ENCODE measurements at regions of chr1 and their contacts with region 1.

Region 1: DNA sequence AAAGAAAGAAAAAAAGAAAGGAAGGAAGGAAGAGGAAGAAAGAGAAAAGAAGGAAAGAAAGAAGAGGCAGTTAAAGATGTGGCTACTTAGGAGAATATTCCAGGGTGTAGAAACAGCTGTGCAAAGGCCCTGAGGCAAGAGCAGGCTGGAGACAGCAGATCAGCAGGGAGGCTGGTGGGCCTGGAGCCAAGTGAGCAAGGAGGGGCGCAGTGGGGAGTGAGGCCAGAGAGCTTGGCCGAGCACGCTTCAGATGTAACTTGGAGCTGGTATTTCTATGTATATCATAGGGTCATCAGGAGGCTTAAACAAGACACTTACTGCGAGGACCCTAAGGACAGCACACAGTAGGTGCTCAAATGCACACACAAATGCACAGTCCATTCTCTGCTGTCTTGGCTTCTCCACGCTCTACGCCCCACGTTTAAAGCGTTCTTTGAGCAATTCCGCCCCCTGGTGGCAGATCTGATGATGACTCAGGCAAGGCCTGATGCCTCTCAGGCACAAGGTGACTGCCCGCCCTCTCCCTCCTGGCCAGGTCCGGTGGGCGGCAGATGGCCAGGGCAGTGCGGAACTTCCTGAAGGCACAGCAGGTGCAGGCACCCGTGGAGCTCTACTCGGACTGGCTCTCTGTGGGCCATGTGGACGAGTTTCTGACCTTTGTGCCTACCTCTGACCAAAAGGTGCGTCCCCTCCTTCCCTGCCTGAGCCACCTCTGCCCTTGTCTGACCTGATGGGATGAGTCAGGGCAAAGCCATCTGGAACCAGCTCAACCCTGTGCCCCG is 11.9 kb upstream of the PADI3 start:
- DNase-seq: peak; percentile 91
- H3K4me3 Mint-ChIP-seq: no peak overlapping the region
- H3K27ac Mint-ChIP-seq: no peak overlapping the region
- H3K4me1 Mint-ChIP-seq: no peaks in the 10 kb centered on the region
- H3K27me3 Mint-ChIP-seq: peaks cover 28% of the 10 kb centered on the region

Region 2: DNA sequence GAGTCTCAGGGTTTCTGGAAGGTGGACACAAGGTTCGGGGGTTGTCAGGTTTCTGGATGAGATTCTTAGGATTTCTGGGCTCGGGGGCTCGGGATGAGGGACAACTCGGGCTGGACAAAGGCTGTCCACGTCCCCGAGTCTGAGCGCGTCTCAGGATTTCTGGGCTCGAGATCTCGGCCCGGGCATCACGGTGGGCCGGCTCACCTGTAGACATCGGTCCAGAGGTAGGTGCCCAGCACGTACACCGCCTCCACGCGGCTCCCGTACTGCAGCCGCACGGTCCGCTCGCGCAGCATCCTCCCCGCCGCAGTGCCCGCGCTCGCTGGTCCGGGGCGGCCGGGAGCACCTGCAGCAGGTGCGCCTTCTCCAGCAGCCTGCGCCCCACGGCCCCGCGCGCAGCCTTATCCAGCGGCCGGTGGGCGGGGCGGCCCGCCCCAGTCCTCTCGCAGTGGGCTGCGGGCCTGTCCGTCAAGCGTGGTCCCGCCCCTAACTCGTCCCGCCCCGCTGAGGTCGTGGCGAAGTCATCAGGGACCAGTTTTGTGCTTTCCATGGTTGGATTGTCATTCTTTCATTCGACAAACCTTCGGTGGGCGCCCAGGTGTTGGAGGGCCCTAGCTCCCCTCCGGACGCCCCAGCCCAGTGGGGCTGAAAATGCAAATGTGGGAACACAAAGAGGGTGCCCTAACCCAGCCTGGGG is 117.7 kb before region 1 on chr1 and contains the start of gene PADI2:
- CTCF ChIA-PET with region 1: interaction called, 148 read pairs
- DNase-seq: peak; percentile 66
- H3K4me3 Mint-ChIP-seq: no peak within 1 kb of the TSS
- H3K27ac Mint-ChIP-seq: no peak within 1 kb of the TSS
- H3K4me1 Mint-ChIP-seq: peaks cover 12% of the 10 kb centered on the region
- H3K27me3 Mint-ChIP-seq: peaks cover 85% of the 10 kb centered on the region

Region 3: GRCh38 chr1:17125756-17126237 is 111.2 kb before region 1 on chr1:
- CTCF ChIA-PET with region 1: interaction called, 148 read pairs
- DNase-seq: peak; percentile 87
- H3K4me3 Mint-ChIP-seq: no peak overlapping the region
- H3K27ac Mint-ChIP-seq: no peak overlapping the region
- H3K4me1 Mint-ChIP-seq: no peaks in the 10 kb centered on the region
- H3K27me3 Mint-ChIP-seq: peaks cover 43% of the 10 kb centered on the region

Region 4: DNA sequence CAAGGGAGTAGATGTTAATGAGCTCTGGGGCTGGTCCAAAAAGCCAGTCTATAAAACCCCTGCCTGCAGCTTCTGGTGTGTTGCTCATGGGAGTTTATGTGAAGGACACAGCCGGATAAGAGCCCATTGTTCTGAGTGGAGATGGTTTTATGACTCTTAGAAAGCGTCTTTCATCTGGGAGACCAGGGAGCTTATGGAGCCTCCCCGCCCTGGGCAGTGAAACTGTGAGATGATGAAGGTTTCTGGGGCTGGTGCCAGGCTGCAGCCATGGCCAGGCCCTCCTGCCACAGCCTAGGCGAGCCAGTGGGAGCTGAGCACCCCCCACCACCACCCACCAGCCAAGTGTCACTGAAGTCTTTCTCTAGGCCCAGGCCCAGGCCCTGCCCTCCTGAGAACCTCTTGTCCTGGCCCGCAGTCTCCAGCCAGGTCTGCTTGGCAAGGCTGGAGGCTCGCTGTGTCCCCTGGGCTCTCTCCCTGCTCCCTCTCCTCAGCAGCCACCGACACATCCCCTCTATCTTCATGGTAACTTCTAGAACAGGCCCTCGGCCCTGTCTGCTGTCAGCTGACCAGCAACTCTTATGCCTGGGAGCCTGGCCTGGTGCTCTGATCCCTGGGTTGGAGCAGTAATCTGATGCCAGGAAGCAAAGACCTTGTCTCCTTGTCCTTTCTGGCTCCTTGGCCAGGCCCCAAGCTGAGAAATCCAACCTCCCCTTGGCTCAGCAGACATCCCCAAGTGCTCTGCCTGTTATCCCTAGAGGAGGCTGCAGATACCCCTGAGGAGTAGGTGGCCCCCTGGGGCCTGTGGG is 294.9 kb after region 1 on chr1:
- CTCF ChIA-PET with region 1: no interaction called
- DNase-seq: no peak
- H3K4me3 Mint-ChIP-seq: no peak overlapping the region
- H3K27ac Mint-ChIP-seq: no peak overlapping the region
- H3K4me1 Mint-ChIP-seq: no peaks in the 10 kb centered on the region
- H3K27me3 Mint-ChIP-seq: peaks cover 30% of the 10 kb centered on the region

Measured in activated naive CD4-positive, alpha-beta T cell treated with anti-CD3 and anti-CD28 coated beads, Interleukin-2, amount 10 ng/mL, durations not matched to agents 7 days and 5 days (primary cell).